Activated CD4-positive, alpha-beta T cell treated with anti-CD3 and anti-CD28 coated beads for 36 hours (primary cell): ENCODE measurements at regions of chr3 and their contacts with region 1.

Region 1: GRCh38 chr3:51434746-51435327 is 43.8 kb downstream of the RBM15B start:
- DNase-seq: peak; percentile 63
- ATAC-seq: peak; percentile 98
- H3K4me3 Mint-ChIP-seq: no peak overlapping the region
- H3K27ac Mint-ChIP-seq: no peak overlapping the region
- H3K4me1 Mint-ChIP-seq: peaks cover 7% of the 10 kb centered on the region
- H3K27me3 Mint-ChIP-seq: no peaks in the 10 kb centered on the region

Region 2: DNA sequence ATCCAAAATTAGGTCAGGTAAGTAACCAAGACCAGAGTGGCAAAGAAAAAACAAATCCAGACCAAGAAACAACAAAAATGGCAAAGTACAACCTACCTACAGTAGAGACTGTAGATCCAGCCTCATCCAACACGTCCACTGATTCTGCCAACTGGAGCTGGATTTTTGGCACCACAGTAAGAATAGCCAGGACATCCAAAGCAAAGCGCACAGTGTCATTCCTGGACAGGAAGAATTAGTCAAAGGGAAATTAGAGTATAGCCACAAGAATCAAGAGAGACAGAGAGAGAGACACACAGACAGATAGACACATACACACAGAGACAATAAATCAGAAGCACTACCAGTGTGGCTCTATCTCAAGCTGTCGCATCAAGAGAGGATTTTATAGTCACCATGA is 12.6 kb before region 1 on chr3:
- CTCF ChIA-PET with region 1: interaction called, 11 read pairs
- POLR2A ChIA-PET with region 1: no interaction called
- intact Hi-C with region 1: no loop called
- DNase-seq: no peak
- ATAC-seq: no peak
- H3K4me3 Mint-ChIP-seq: no peak overlapping the region
- H3K27ac Mint-ChIP-seq: peak overlapping the region; percentile 49
- H3K4me1 Mint-ChIP-seq: no peaks in the 10 kb centered on the region
- H3K27me3 Mint-ChIP-seq: no peaks in the 10 kb centered on the region

Region 3: DNA sequence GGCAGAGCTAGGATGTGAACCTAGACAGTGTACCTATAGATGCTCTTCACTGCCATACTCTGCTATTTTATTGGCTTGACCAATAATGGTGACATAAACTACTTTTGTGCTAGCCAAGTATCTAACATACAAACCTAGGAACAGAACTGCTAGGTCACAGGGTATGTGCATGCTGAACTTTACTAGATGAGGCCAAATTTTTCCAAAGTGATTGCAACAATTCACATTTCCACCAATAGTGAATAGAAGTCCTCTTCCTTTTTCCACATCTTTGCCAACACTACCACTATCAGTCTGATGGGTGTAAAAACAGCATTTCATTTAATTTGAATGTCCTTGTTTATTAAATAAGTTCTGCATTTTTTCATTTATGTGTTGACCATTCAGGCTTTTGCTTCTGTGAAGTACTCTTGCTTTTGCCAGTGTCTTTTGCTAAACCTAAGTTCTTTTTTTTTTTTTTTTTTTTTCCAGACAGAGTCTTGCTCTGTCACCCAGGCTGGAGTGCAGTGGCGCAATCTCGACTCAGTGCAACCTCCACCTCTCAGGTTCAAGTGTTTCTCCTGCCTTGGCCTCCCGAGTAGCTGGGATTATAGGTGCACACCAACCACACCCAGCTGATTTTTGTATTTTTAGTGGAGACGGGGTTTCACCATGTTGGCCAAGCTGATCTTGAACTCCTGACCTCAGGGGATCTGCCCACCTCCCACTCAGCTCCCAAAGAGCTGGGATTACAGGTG is 10.9 kb after region 1 on chr3:
- CTCF ChIA-PET with region 1: interaction called, 15 read pairs
- POLR2A ChIA-PET with region 1: no interaction called
- intact Hi-C with region 1: no loop called
- DNase-seq: no peak
- ATAC-seq: no peak
- H3K4me3 Mint-ChIP-seq: no peak overlapping the region
- H3K27ac Mint-ChIP-seq: peak overlapping the region; percentile 31
- H3K4me1 Mint-ChIP-seq: peaks cover 30% of the 10 kb centered on the region
- H3K27me3 Mint-ChIP-seq: no peaks in the 10 kb centered on the region